HAP-1 (cell line): ENCODE measurements at regions of chr1 and their contacts with region 1.

Region 1: DNA sequence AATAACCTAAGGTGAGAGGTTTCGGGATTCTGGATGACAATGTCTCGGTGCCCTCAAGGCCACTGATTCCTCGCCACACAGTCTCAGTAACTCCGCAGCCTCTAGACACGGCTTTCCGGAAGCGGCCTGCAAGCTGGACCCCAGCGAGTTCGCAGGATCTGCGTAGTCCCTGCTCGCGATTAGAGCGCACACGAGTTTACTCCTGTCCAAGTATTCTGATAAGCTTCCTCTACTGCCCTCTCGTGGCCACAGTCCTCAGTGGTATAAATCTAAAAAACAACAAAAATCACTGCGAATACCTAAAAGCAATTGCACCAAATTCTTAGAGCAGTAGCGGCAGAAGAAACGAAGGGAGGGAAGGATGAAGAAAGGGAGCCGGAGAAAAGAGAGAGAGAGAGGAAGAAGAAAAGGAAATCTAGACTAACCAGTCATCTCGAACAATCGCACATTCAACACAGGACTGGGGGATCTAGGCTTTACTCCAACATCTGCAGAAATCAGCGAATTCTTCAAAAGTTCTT is 1.1 kb upstream of the PLXNA2 start:
- DNase-seq: peak; percentile 87 to 92
- H3K4me3 ChIP-seq: peak overlapping the region; percentile 41; the same call in 1 of the 2 replicates
- H3K4me1 ChIP-seq: peaks cover 7% of the 10 kb centered on the region; the same call in 1 of the 2 replicates
- H3K27me3 ChIP-seq: peaks cover 22% of the 10 kb centered on the region

Region 2: DNA sequence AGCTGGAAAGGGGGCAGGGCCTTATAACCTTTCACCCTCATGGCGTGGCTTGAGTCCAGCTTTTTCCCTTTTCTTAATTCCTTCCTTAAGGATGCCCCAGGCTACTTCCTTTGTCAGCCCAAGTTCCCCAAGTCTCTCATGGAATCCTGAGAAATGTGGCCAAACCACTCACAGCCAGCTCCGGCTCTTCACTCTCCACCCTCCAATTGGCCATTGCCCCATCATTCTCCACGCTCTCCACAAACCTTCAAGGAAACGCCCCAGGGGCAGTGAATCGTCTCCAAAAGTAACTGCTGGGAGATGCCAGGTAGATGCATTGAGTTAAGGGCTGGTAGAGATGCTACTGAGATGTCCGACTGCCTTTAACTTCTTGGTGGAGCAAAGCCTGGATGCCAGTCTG is 220.8 kb before region 1 on chr1:
- in situ Hi-C with region 1: loop called (anchors 5 kb)
- DNase-seq: no peak
- H3K4me3 ChIP-seq: no peak overlapping the region
- H3K4me1 ChIP-seq: no peaks in the 10 kb centered on the region
- H3K27me3 ChIP-seq: no peaks in the 10 kb centered on the region